Activated CD8-positive, alpha-beta T cell treated with anti-CD3 and anti-CD28 coated beads for 36 hours (primary cell): ENCODE measurements at regions of chr11 and their contacts with region 1.

Region 1: GRCh38 chr11:34512840-34513681 is 533 bp downstream of the ELF5 start:
- DNase-seq: peak; percentile 72
- ATAC-seq: peak; percentile 96
- H3K4me3 Mint-ChIP-seq: no peak overlapping the region
- H3K27ac Mint-ChIP-seq: no peak overlapping the region
- H3K4me1 Mint-ChIP-seq: no peaks in the 10 kb centered on the region
- H3K27me3 Mint-ChIP-seq: no peaks in the 10 kb centered on the region
- CTCF ChIP-seq: peak; percentile 63

Region 2: DNA sequence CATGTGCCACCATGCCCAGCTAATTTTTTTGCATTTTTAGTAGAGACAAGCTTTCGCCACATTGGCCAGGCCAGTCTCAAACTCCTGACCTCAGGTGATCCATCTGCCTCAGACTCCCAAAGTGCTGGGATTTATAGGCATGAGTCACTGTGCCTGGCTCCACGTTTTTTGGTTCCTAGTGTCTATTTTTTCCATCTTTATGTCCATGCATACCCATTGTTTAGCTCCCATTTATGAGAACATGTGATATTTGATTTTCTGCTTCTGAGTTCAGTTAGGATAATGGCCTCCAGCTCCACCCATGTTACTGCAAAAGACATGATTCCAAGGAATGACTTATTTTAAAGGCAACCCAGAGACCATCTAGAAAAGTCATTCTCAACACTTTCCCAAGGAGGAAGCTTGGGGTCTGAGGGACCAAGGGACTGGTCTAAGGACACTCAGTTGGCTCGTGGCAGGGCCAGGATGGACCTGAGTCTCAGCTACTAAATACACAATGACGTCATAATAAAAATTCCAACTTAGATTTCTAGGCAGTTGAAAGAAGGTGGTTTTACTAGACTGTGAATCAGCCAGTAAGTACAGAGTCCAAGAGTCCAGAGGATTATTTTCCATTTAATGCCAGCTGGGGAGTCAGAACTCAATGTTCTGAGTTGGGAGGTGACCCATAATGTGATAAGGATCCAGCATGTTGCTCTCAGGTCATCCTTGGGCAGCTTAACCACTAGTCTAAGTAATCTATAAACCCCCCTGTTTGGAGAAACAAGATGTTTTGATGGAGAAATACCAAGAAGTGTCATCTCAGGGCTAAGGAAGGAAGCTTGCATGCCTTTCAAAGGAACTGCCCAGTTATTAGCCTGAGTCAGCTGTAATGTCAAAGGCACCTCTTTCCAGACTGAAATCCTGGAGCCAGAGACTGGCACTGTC is 194.7 kb before region 1 on chr11:
- CTCF ChIA-PET with region 1: no interaction called
- POLR2A ChIA-PET with region 1: no interaction called
- intact Hi-C with region 1: no loop called
- DNase-seq: no peak
- ATAC-seq: no peak
- H3K4me3 Mint-ChIP-seq: no peak overlapping the region
- H3K27ac Mint-ChIP-seq: no peak overlapping the region
- H3K4me1 Mint-ChIP-seq: peaks cover 10% of the 10 kb centered on the region
- H3K27me3 Mint-ChIP-seq: no peaks in the 10 kb centered on the region
- CTCF ChIP-seq: no peak

Region 3: GRCh38 chr11:34501500-34501899 is 11.6 kb before region 1 on chr11:
- CTCF ChIA-PET with region 1: interaction called, 15 read pairs
- POLR2A ChIA-PET with region 1: no interaction called
- intact Hi-C with region 1: no loop called
- DNase-seq: no peak
- ATAC-seq: no peak
- H3K4me3 Mint-ChIP-seq: no peak overlapping the region
- H3K27ac Mint-ChIP-seq: no peak overlapping the region
- H3K4me1 Mint-ChIP-seq: no peaks in the 10 kb centered on the region
- H3K27me3 Mint-ChIP-seq: no peaks in the 10 kb centered on the region
- CTCF ChIP-seq: no peak

Region 4: GRCh38 chr11:34525887-34526636 is 13.0 kb after region 1 on chr11:
- CTCF ChIA-PET with region 1: interaction called, 20 read pairs
- POLR2A ChIA-PET with region 1: interaction called, 3 read pairs
- intact Hi-C with region 1: no loop called
- DNase-seq: no peak
- ATAC-seq: no peak
- H3K4me3 Mint-ChIP-seq: no peak overlapping the region
- H3K27ac Mint-ChIP-seq: no peak overlapping the region
- H3K4me1 Mint-ChIP-seq: no peaks in the 10 kb centered on the region
- H3K27me3 Mint-ChIP-seq: peaks cover 2% of the 10 kb centered on the region
- CTCF ChIP-seq: no peak